HCT116 (cell line): ENCODE measurements at regions of chr1 and their contacts with region 1.

Region 1: GRCh38 chr1:215146341-215146826 is 63.8 kb downstream of the KCNK2 start:
- DNase-seq: peak; percentile 21
- ATAC-seq: no peak
- H3K4me3 ChIP-seq: no peak overlapping the region
- H3K27ac ChIP-seq: no peak overlapping the region
- H3K4me1 ChIP-seq: no peaks in the 10 kb centered on the region
- H3K27me3 ChIP-seq: no peaks in the 10 kb centered on the region
- CTCF ChIP-seq: peak; percentile 44 to 62 (median 44); a peak in 5 of 6 replicates
- POLR2A ChIP-seq: no peak
- RAD21 ChIP-seq: peak; percentile 76

Region 2: GRCh38 chr1:214658786-214659185 is 487.6 kb before region 1 on chr1:
- CTCF ChIA-PET with region 1: no interaction called
- POLR2A ChIA-PET with region 1: no interaction called
- RAD21 ChIA-PET with region 1: no interaction called
- intact Hi-C with region 1: loop called (anchors 1 kb)
- DNase-seq: no peak
- ATAC-seq: peak; percentile 44; the same call in 1 of the 2 replicates
- H3K4me3 ChIP-seq: no peak overlapping the region
- H3K27ac ChIP-seq: no peak overlapping the region
- H3K4me1 ChIP-seq: no peaks in the 10 kb centered on the region
- H3K27me3 ChIP-seq: no peaks in the 10 kb centered on the region
- CTCF ChIP-seq: peak; percentile 22 to 33 (median 25); a peak in 3 of 6 replicates
- POLR2A ChIP-seq: no peak
- RAD21 ChIP-seq: peak; percentile 56

Region 3: GRCh38 chr1:214808845-214809460 is 337.4 kb before region 1 on chr1:
- CTCF ChIA-PET with region 1: interaction called, 13 read pairs
- POLR2A ChIA-PET with region 1: no interaction called
- RAD21 ChIA-PET with region 1: interaction called in 1 of 2 experiments, 6 read pairs
- intact Hi-C with region 1: loop called (anchors 1 kb)
- DNase-seq: peak; percentile 22
- ATAC-seq: peak; percentile 90
- H3K4me3 ChIP-seq: no peak overlapping the region
- H3K27ac ChIP-seq: no peak overlapping the region
- H3K4me1 ChIP-seq: no peaks in the 10 kb centered on the region
- H3K27me3 ChIP-seq: no peaks in the 10 kb centered on the region
- CTCF ChIP-seq: peak; percentile 34 to 53 (median 45); a peak in 4 of 6 replicates
- POLR2A ChIP-seq: no peak
- RAD21 ChIP-seq: peak; percentile 73

Region 4: GRCh38 chr1:215160351-215160750 is 14.0 kb after region 1 on chr1:
- CTCF ChIA-PET with region 1: no interaction called
- POLR2A ChIA-PET with region 1: no interaction called
- RAD21 ChIA-PET with region 1: no interaction called
- intact Hi-C with region 1: no loop called
- DNase-seq: no peak
- ATAC-seq: no peak
- H3K4me3 ChIP-seq: no peak overlapping the region
- H3K27ac ChIP-seq: no peak overlapping the region
- H3K4me1 ChIP-seq: no peaks in the 10 kb centered on the region
- H3K27me3 ChIP-seq: no peaks in the 10 kb centered on the region
- CTCF ChIP-seq: no peak
- POLR2A ChIP-seq: no peak
- RAD21 ChIP-seq: no peak